Vagina (tissue), 2 donors: ENCODE measurements at regions of chr13 and their contacts with region 1.

Region 1: DNA sequence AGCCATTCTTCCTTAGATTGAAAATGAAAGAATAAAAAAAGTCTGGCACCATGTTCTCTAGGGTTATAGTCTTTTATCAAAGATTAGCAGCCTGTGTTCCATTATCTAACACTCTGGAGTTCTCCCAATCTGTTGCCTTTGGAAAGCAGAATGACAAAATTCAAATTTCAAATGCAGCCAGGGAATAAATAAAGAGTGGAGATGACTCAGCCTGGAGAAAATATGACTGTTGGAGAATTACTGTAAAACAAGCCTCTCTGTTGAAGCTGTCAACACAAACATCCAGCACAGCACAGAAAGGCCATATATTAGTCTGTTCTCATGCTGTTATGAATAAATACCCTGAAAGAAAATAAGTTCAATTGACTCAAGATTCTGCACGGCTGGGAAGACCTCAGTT is 650.5 kb upstream of the SLC10A2 start:
- DNase-seq: no peak
- H3K4me3 ChIP-seq: no peak overlapping the region
- H3K27ac ChIP-seq: no peak overlapping the region
- H3K4me1 ChIP-seq: no peaks in the 10 kb centered on the region
- H3K27me3 ChIP-seq: no peaks in the 10 kb centered on the region
- CTCF ChIP-seq: no peak
- POLR2A ChIP-seq: no peak

Region 2: GRCh38 chr13:103976366-103976765 is 259.6 kb after region 1 on chr13:
- intact Hi-C with region 1: loop called (anchors 5 kb)
- DNase-seq: no peak
- H3K4me3 ChIP-seq: no peak overlapping the region
- H3K27ac ChIP-seq: no peak overlapping the region
- H3K4me1 ChIP-seq: no peaks in the 10 kb centered on the region
- H3K27me3 ChIP-seq: no peaks in the 10 kb centered on the region
- CTCF ChIP-seq: no peak
- POLR2A ChIP-seq: no peak

Region 3: GRCh38 chr13:105702441-105702840 is 1985.7 kb after region 1 on chr13:
- intact Hi-C with region 1: no loop called
- DNase-seq: no peak
- H3K4me3 ChIP-seq: no peak overlapping the region
- H3K27ac ChIP-seq: no peak overlapping the region
- H3K4me1 ChIP-seq: no peaks in the 10 kb centered on the region
- H3K27me3 ChIP-seq: no peaks in the 10 kb centered on the region
- CTCF ChIP-seq: no peak
- POLR2A ChIP-seq: no peak